Ovary (tissue), 10 donors: ENCODE measurements at regions of chr1 and their contacts with region 1.

Region 1: DNA sequence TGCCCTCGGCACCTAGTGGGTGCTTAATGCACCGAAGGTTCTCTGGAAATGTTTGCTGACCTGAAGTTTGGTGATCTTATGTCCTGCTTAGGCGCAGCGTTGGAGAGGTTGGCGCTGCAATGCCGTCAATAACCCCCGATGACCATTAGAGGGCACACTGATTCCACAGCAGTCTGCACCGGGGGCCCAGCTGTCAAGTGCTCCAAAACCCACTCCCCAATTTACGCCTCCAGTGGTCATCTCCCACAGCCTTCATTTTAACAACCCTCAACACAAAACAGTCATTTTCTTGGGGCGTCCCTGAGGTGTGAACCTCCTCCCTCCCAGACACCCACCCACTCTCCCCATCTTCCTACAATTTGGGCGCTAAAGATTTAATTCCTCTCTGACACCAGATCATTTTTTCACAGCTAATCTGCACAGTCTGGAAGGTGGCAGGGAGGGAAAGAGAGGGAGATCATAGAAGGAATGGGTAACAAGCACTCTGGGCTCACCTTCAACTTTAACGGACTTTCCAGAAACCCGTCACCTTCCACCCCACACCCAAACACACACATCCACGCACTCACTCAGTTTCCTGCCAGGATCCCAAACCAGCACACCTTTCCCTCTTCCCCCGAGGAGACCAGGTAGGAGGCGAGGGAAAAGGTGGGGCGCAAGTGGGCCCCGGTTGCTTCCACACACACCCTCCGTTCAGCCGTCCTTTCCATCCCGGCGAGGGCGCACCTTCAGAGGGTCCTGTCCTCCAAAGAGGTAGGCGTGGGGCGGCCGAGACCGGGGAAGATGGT is 576 bp upstream of the NPR1 start:
- DNase-seq: peak; percentile 59 to 71 (median 67)
- H3K4me3 ChIP-seq: peak overlapping the region; percentile 64
- H3K27ac ChIP-seq: peak overlapping the region; percentile 44 to 65
- H3K4me1 ChIP-seq: no peaks in the 10 kb centered on the region
- H3K27me3 ChIP-seq: no peaks in the 10 kb centered on the region
- CTCF ChIP-seq: peak; percentile 73 to 86 (median 83)
- EP300 ChIP-seq: no peak
- POLR2A ChIP-seq: no peak

Region 2: DNA sequence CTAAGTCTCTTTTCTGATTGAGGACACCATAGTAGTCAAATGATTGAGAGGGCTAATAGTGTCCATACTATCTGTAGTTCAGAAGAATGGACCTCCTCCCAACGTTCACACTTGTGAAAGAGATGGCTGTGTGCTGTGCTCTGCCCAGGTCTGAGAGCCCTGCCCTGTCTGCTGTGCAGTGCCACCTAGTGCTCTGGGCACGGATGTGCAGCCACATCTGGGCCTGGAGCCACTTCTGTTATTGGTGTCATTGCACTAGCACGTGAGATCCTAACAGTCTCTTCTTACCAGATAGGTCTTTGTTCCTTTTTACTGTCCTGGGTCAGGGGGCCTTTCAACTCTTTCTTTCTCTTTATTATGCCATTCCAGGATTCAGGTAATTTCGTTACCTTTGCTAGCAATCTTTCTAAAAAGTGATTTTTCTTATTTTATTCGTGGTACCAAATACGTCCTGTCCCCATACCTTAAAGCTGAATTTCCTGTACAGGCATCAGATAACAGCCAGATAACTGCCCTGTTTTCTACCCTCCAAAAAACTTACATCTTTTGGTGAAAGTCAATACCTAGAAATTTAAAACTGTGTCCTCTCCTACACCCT is 71.6 kb after region 1 on chr1:
- intact Hi-C with region 1: loop called (anchors 2 to 5 kb)
- DNase-seq: peak; percentile 82 to 91 (median 86)
- H3K4me3 ChIP-seq: no peak overlapping the region
- H3K27ac ChIP-seq: peak overlapping the region in 1 of 2 donors; percentile 34
- H3K4me1 ChIP-seq: peaks cover 8% of the 10 kb centered on the region
- H3K27me3 ChIP-seq: no peaks in the 10 kb centered on the region
- CTCF ChIP-seq: peak; percentile 79 to 88 (median 87)
- EP300 ChIP-seq: no peak
- POLR2A ChIP-seq: no peak

Region 3: DNA sequence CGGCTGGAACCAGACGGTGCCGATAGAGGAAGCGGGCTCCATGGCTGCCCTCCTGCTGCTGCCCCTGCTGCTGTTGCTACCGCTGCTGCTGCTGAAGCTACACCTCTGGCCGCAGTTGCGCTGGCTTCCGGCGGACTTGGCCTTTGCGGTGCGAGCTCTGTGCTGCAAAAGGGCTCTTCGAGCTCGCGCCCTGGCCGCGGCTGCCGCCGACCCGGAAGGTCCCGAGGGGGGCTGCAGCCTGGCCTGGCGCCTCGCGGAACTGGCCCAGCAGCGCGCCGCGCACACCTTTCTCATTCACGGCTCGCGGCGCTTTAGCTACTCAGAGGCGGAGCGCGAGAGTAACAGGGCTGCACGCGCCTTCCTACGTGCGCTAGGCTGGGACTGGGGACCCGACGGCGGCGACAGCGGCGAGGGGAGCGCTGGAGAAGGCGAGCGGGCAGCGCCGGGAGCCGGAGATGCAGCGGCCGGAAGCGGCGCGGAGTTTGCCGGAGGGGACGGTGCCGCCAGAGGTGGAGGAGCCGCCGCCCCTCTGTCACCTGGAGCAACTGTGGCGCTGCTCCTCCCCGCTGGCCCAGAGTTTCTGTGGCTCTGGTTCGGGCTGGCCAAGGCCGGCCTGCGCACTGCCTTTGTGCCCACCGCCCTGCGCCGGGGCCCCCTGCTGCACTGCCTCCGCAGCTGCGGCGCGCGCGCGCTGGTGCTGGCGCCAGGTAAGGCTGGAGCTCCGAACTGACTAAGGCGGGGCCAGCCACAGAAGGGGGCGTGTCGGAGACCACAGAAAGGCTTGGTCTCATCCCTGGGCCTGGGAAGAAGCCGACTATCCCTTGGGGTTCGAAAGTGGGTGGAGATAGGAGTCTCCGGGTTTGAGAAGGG is 97.8 kb after region 1 on chr1:
- intact Hi-C with region 1: loop called (anchors 2 to 5 kb)
- DNase-seq: peak; percentile 82 to 85 (median 83)
- H3K4me3 ChIP-seq: peak overlapping the region; percentile 73
- H3K27ac ChIP-seq: peak overlapping the region; percentile 69 to 84
- H3K4me1 ChIP-seq: peaks cover 9% of the 10 kb centered on the region
- H3K27me3 ChIP-seq: no peaks in the 10 kb centered on the region
- CTCF ChIP-seq: no peak
- EP300 ChIP-seq: no peak
- POLR2A ChIP-seq: peak; percentile 31

Region 4: DNA sequence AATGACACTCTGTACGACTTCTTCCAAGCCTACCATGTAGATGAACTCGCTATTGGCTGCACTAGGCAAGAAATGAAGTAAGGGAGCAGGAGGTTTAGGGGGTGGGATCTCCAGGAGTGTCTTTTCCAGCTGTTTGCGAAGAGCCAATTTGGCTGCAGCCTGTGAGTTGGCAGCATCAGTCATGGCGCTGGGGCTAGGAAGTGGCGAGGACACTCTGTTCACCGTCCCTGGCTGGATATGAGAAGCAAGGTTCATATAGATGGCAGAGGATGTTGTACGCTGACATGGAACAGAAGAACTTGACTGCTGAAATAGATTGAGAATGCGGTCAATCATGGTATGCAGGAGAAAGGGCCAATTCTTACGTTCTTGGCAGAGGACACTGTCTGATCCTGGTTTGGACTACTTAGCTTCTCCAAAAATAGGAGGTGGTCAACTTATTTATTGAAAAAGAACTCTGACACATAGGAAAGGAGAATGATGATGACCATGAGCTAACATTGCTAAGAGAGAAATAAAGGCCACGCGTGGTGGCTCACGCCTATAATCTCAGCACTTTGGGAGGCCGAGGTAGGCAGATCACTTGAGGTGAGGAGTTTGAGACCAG is 138.5 kb after region 1 on chr1:
- intact Hi-C with region 1: no loop called
- DNase-seq: no peak
- H3K4me3 ChIP-seq: no peak overlapping the region
- H3K27ac ChIP-seq: no peak overlapping the region
- H3K4me1 ChIP-seq: no peaks in the 10 kb centered on the region
- H3K27me3 ChIP-seq: no peaks in the 10 kb centered on the region
- CTCF ChIP-seq: no peak
- EP300 ChIP-seq: no peak
- POLR2A ChIP-seq: no peak

Region 5: GRCh38 chr1:153977250-153978240 is 299.6 kb after region 1 on chr1 and contains the start of gene JTB:
- intact Hi-C with region 1: loop called in 2 of 4 experiments (anchors 5 to 10 kb)
- DNase-seq: peak; percentile 86 to 90 (median 86)
- H3K4me3 ChIP-seq: peak within 1 kb of the TSS; percentile 85
- H3K27ac ChIP-seq: peak within 1 kb of the TSS; percentile 25 to 73
- H3K4me1 ChIP-seq: peaks cover 4% of the 10 kb centered on the region
- H3K27me3 ChIP-seq: no peaks in the 10 kb centered on the region
- CTCF ChIP-seq: no peak
- EP300 ChIP-seq: no peak
- POLR2A ChIP-seq: peak; percentile 87
- total RNA-seq, gene JTB: 82.7 to 207 (median 88.6) TPM

Region 6: GRCh38 chr1:153985941-153986761 is 308.2 kb after region 1 on chr1 and contains the start of gene RAB13:
- intact Hi-C with region 1: loop called in 3 of 4 experiments (anchors 5 to 10 kb)
- DNase-seq: peak; percentile 87 to 89 (median 88)
- H3K4me3 ChIP-seq: peak within 1 kb of the TSS; percentile 39
- H3K27ac ChIP-seq: peak within 1 kb of the TSS; percentile 71 to 84
- H3K4me1 ChIP-seq: peaks cover 8% of the 10 kb centered on the region
- H3K27me3 ChIP-seq: no peaks in the 10 kb centered on the region
- CTCF ChIP-seq: no peak
- EP300 ChIP-seq: peak; percentile 57
- POLR2A ChIP-seq: no peak
- total RNA-seq, gene RAB13: 31.4 to 147 (median 101) TPM